GM18951 (cell line): ENCODE measurements at regions of chr7 and their contacts with region 1.

Region 1: DNA sequence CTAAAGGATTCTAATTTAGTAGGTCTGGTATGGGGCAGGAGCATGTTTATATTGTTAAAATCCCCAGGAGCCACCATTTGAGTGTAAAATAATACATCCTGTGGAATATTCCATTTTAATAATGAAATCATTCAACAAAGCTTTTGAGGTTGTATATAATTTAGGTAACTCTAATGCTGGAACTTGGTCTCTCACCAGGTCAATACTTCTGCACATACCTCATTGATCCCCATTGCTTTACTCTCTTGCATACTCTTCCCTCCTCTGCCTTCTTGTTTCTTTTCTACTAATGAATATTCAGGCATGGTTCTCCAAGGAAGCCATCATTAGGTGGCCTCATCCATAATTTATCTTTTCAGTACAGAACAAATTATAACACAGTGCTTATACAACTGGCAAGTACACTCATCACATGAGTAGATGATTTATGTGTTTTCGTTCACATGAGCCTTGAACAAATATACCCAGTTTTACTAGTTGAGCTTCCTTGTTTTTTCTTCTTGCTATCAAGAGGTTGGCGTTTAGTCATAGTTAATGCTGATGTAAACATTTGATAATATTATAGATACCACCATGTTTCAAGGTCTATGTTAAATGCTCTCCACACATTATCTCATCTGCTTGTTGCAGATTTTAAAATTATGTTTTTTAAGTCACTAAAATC is 7.2 kb downstream of the PALS2 start:
- POLR2A ChIP-seq: no peak

Region 2: DNA sequence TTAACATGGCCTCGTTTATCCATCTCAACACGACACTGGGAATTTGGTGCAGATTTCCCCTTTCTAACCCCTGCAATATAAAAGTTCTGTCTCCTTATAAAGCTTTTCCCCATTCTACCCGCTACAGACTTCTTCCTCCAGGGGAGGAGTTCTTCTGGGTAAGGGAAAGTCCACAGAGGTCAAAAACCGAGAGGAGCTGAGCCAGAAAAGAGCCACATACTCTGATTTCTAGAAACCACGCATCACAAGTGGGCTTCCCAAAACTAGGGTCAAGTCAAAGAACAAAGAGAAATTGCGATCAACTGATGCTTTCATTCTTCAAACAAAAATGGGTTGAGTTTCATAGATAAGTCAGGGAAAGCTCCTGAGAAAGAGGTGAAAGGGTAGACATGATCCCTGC is 1846.7 kb before region 1 on chr7:
- in situ Hi-C with region 1: no loop called
- POLR2A ChIP-seq: no peak

Region 3: DNA sequence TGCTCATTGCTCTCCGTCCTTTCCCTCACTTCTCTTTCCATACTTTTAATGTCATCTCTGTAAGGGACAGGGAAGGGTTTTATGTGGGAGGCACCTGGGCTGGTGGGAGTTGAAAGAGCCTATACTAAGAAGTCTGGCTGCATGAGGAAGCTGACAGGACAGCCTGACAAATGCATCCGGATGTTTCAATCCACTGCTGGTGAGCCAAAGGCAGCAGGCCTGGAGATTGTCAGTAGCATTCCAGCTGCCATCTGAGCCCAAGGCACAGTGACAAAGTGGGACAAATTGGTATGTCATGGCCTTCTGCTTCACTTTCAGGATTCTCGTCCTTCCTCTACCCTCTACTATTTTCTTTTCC is 652.0 kb before region 1 on chr7:
- in situ Hi-C with region 1: no loop called
- POLR2A ChIP-seq: no peak

Region 4: DNA sequence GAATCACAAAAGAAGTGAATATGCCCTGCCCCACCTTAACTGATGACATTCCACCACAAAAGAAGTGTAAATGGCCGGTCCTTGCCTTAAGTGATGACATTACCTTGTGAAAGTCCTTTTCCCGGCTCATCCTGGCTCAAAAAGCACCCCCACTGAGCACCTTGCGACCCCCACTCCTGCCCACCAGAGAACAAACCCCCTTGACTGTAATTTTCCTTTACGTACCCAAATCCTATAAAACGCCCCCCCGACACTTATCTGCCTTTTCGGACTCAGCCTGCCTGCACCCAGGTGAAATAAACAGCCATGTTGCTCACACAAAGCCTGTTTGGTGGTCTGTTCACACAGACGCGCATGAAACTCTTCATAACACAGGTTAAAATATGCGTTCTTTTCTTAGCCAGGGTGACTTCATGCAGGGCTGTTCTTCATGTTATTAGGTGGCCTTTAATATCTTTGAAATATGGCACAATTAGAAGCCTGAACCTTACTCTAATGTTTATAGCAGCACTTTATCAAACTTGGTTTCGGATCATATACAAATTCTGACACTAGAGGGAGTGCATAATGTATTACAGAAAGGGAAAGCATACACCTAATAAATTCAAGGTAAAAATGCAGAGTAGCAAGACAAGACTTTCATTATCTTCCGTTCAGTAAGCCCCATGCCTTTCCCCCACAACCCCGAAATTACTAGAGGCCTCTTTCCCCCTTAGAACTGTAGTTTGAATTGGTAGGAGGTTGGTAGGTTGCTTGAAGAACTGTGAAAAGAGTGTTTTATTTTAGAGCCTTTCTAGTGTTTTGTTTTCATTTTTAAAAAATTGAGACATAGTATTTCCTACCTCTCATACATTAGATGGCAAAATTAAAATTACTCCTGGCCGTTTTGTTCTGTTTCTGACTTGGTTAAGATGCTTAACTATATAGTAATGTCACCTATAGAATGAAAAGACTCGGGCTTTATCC is 178.5 kb before region 1 on chr7:
- in situ Hi-C with region 1: loop called (anchors 5 kb)
- POLR2A ChIP-seq: no peak